Panc1 (cell line): ENCODE measurements at regions of chr5 and their contacts with region 1.

Region 1: GRCh38 chr5:77774981-77775789 is 954 bp downstream of the TBCA start:
- DNase-seq: peak; percentile 10
- ATAC-seq: no peak
- H3K4me3 ChIP-seq: peak overlapping the region; percentile 69 to 86
- H3K27ac ChIP-seq: peak overlapping the region; percentile 95
- H3K4me1 ChIP-seq: peaks cover 27% of the 10 kb centered on the region
- H3K27me3 ChIP-seq: no peaks in the 10 kb centered on the region
- CTCF ChIP-seq: no peak

Region 2: DNA sequence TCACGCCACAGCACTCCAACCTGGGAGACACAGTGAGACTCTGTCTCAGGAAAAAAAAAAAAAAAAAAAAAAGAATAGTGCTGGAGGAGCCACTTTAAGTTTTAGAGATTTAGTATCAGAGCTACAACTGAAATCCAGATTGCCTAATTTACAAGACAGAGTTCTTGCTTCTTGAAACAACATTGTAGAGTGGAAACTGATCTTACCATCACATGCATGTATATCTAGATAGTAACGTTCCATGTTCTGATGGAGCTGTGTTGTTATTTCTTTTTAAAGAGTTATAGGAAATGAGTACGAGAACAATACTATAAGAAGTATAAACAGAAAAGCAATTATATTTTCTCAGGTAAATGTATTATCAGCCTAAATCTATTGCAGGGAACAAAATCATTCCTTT is 48.0 kb before region 1 on chr5:
- CTCF ChIA-PET with region 1: no interaction called
- POLR2A ChIA-PET with region 1: interaction called, 13 read pairs
- in situ Hi-C with region 1: no loop called
- intact Hi-C with region 1: no loop called
- DNase-seq: no peak
- ATAC-seq: no peak
- H3K4me3 ChIP-seq: no peak overlapping the region
- H3K27ac ChIP-seq: no peak overlapping the region
- H3K4me1 ChIP-seq: no peaks in the 10 kb centered on the region; the same call in 1 of the 2 replicates
- H3K27me3 ChIP-seq: no peaks in the 10 kb centered on the region
- CTCF ChIP-seq: no peak